CD14-positive monocyte (primary cell): ENCODE measurements at regions of chr15 and their contacts with region 1.

Region 1: GRCh38 chr15:98663606-98664005 is 15.3 kb downstream of the IGF1R start:
- DNase-seq: no peak
- H3K4me3 ChIP-seq: no peak overlapping the region
- H3K4me3 Mint-ChIP-seq: no peak overlapping the region
- H3K27ac ChIP-seq: no peak overlapping the region
- H3K27ac Mint-ChIP-seq: peak overlapping the region in 2 of 7 donors; percentile 5 to 21
- H3K4me1 ChIP-seq: peaks cover 1 to 8% of the 10 kb centered on the region in 2 donors
- H3K4me1 Mint-ChIP-seq: peaks cover 21% of the 10 kb centered on the region
- H3K27me3 ChIP-seq: no peaks in the 10 kb centered on the region
- H3K27me3 Mint-ChIP-seq: peaks cover 0 to under 1% (median 0%) of the 10 kb centered on the region in 3 donors
- CTCF ChIP-seq: no peak

Region 2: DNA sequence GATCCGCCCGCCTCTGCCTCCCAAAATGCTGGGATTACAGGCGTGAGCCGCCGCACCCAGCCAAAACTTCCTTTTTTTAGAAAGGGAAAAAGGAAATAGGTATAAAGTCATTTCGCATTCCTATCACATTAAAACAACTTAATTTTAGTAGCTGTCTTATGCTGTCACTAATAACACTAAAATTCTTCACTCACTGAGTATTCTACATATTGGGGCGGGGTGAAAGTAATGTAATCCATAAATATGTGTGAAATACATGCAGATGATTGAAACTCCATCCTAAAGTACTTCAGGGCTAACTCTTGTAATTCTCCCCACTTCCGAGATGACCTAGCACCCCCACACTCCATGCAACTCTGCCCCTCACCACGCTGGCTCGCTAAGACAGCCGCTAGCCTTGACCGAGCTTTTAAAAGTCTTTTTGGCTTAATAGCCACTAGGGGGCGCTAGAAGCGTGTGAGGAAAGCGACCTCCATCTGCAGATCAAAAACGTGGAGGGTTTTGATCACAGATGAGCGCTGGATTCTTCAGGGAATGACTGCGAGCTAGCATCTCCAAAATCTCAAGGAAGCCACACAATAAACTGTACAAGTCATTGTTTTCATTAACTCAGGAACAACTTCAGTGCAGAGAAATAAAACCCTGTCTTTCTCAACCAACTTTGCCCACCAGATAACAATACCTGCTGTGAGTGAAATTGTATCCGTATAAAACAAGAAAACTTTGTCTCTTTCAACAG is 144.6 kb before region 1 on chr15:
- intact Hi-C with region 1: loop called in 1 of 2 experiments (anchors 5 kb)
- DNase-seq: peak; percentile 66 to 72 (median 68)
- H3K4me3 ChIP-seq: no peak overlapping the region
- H3K4me3 Mint-ChIP-seq: peak overlapping the region in 1 of 2 donors; percentile 56
- H3K27ac ChIP-seq: no peak overlapping the region
- H3K27ac Mint-ChIP-seq: no peak overlapping the region
- H3K4me1 ChIP-seq: peaks cover 5 to 7% of the 10 kb centered on the region in 2 donors
- H3K4me1 Mint-ChIP-seq: peaks cover 5% of the 10 kb centered on the region
- H3K27me3 ChIP-seq: no peaks in the 10 kb centered on the region
- H3K27me3 Mint-ChIP-seq: peaks cover 0 to 6% (median 0%) of the 10 kb centered on the region in 3 donors
- CTCF ChIP-seq: peak; percentile 87

Region 3: GRCh38 chr15:98570119-98570518 is 93.5 kb before region 1 on chr15:
- intact Hi-C with region 1: no loop called
- DNase-seq: no peak
- H3K4me3 ChIP-seq: no peak overlapping the region
- H3K4me3 Mint-ChIP-seq: no peak overlapping the region
- H3K27ac ChIP-seq: no peak overlapping the region
- H3K27ac Mint-ChIP-seq: no peak overlapping the region
- H3K4me1 ChIP-seq: no peaks in the 10 kb centered on the region
- H3K4me1 Mint-ChIP-seq: no peaks in the 10 kb centered on the region
- H3K27me3 ChIP-seq: peaks cover 0 to 2% of the 10 kb centered on the region in 2 donors
- H3K27me3 Mint-ChIP-seq: peaks cover 14 to 16% (median 14%) of the 10 kb centered on the region in 3 donors
- CTCF ChIP-seq: no peak

Region 4: GRCh38 chr15:98620020-98620419 is 43.6 kb before region 1 on chr15:
- intact Hi-C with region 1: no loop called
- DNase-seq: no peak
- H3K4me3 ChIP-seq: no peak overlapping the region
- H3K4me3 Mint-ChIP-seq: peak overlapping the region in 1 of 2 donors; percentile 44
- H3K27ac ChIP-seq: no peak overlapping the region
- H3K27ac Mint-ChIP-seq: no peak overlapping the region
- H3K4me1 ChIP-seq: no peaks in the 10 kb centered on the region
- H3K4me1 Mint-ChIP-seq: no peaks in the 10 kb centered on the region
- H3K27me3 ChIP-seq: peaks cover 29 to 39% of the 10 kb centered on the region in 2 donors
- H3K27me3 Mint-ChIP-seq: peaks cover 34 to 41% (median 38%) of the 10 kb centered on the region in 3 donors
- CTCF ChIP-seq: no peak